ENCODE measurements at regions of chr19 and their contacts with region 1.

Region 1: DNA sequence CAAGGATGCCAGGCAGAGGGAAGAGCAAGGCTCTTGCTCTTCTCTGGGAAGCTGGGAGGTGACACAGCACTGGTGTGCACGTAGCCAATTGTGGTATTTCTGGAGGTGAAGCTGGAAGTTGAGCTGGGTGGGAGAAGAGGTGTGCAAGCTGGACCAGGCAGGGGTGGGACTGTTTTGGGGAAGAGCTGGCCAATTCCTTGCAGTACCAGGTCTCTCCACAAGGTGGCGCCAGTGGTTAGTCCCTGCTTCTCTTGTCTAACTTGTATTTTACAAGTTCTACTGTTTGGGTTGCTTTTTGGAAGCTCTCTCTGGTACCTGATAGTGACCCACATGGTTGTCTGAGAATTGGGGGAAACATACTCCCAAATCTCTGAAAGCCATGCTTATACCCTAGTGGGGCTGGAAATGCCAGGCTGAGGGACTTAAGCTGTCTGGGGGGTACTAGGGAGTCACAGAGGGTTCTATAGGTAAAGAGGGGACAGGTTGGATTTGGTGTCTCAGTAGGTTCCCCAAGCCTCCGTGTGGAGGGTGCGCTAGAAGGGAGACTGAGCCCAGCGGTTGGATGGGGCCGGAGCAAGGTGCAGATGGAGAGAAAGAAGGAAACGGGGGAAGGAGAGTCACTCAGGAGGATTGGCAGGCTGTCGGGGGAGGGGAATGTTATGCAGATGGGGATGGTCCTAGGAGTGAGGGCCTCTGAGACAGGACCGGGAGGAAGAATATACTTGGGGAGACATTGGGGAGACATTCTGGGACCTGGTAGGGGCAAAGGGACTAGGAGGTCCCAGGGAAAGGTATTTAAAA is 3.0 kb downstream of the HPN start:
- DNase-seq: peak; percentile 79
- ATAC-seq: no peak
- H3K4me3 Mint-ChIP-seq: no peak overlapping the region
- H3K27ac Mint-ChIP-seq: no peak overlapping the region
- H3K4me1 Mint-ChIP-seq: peaks cover 25% of the 10 kb centered on the region
- H3K27me3 Mint-ChIP-seq: peaks cover 4% of the 10 kb centered on the region

Region 2: GRCh38 chr19:35055715-35056179 is 11.2 kb after region 1 on chr19:
- CTCF ChIA-PET with region 1: interaction called, 17 read pairs
- POLR2A ChIA-PET with region 1: no interaction called
- intact Hi-C with region 1: no loop called
- DNase-seq: peak; percentile 41
- ATAC-seq: peak; percentile 47
- H3K4me3 Mint-ChIP-seq: no peak overlapping the region
- H3K27ac Mint-ChIP-seq: no peak overlapping the region
- H3K4me1 Mint-ChIP-seq: no peaks in the 10 kb centered on the region
- H3K27me3 Mint-ChIP-seq: peaks cover 2% of the 10 kb centered on the region

Region 3: GRCh38 chr19:35066691-35067563 is 22.4 kb after region 1 on chr19:
- CTCF ChIA-PET with region 1: interaction called, 17 read pairs
- POLR2A ChIA-PET with region 1: no interaction called
- intact Hi-C with region 1: no loop called
- DNase-seq: peak; percentile 96
- ATAC-seq: peak; percentile 89
- H3K4me3 Mint-ChIP-seq: peak overlapping the region; percentile 39
- H3K27ac Mint-ChIP-seq: peak overlapping the region; percentile 62
- H3K4me1 Mint-ChIP-seq: peaks cover 17% of the 10 kb centered on the region
- H3K27me3 Mint-ChIP-seq: no peaks in the 10 kb centered on the region

Region 4: GRCh38 chr19:35090506-35091237 is 46.2 kb after region 1 on chr19:
- CTCF ChIA-PET with region 1: interaction called, 6 read pairs
- POLR2A ChIA-PET with region 1: no interaction called
- intact Hi-C with region 1: loop called in 1 of 2 experiments (anchors 1 kb)
- DNase-seq: peak; percentile 65
- ATAC-seq: peak; percentile 88
- H3K4me3 Mint-ChIP-seq: no peak overlapping the region
- H3K27ac Mint-ChIP-seq: no peak overlapping the region
- H3K4me1 Mint-ChIP-seq: peaks cover 4% of the 10 kb centered on the region
- H3K27me3 Mint-ChIP-seq: peaks cover 6% of the 10 kb centered on the region

Region 5: GRCh38 chr19:35135389-35135909 is 90.9 kb after region 1 on chr19:
- CTCF ChIA-PET with region 1: interaction called, 9 read pairs
- POLR2A ChIA-PET with region 1: no interaction called
- intact Hi-C with region 1: loop called in 1 of 2 experiments (anchors 5 kb)
- DNase-seq: peak; percentile 83
- ATAC-seq: peak; percentile 95
- H3K4me3 Mint-ChIP-seq: no peak overlapping the region
- H3K27ac Mint-ChIP-seq: no peak overlapping the region
- H3K4me1 Mint-ChIP-seq: peaks cover 4% of the 10 kb centered on the region
- H3K27me3 Mint-ChIP-seq: no peaks in the 10 kb centered on the region

Region 6: DNA sequence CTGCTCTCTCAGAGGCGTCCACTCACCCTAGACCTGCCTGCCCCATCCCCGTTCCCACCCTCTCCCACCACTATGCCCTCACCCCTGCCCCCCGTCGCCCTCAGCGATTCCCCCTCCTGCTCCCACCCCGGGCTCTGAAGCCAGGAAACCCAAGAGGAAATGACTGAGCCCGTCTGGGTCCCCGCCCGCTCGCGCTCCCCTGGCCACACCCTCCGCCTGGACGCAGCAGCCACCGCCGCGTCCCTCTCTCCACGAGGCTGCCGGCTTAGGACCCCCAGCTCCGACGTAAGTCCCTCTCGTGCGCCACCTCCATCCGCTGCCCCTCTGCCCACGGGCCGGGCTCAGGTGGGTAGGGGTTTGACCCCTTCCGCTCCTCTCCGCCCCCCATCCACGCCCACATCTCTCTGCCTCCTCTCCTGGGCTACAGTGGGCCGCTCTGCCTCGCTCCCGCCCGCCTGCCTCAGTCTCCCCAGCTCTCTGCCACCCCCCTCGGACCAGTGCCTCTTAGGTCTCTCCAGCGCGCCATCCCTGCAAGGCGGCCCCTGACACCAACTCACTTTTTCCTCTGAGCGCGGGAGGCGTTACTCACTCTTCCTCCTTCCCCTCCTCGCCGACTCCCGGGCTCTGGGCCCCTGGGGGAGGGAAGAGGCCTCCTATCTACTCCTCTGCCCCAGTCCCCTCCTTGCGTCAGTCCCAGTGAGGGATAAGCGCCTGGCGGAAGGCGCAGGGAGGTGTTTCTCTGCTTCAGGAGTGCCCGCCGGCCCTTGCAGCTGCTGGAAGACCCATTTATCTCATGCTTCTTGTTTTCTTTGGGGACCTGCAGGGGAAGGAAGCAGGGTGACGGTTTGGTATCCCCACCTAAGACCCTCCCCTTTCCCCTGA is 110.2 kb after region 1 on chr19 and contains the start of gene FXYD5:
- CTCF ChIA-PET with region 1: no interaction called
- POLR2A ChIA-PET with region 1: no interaction called
- intact Hi-C with region 1: no loop called
- DNase-seq: peak; percentile 93
- ATAC-seq: peak; percentile 81
- H3K4me3 Mint-ChIP-seq: peak within 1 kb of the TSS; percentile 96
- H3K27ac Mint-ChIP-seq: peak within 1 kb of the TSS; percentile 99
- H3K4me1 Mint-ChIP-seq: peaks cover 52% of the 10 kb centered on the region
- H3K27me3 Mint-ChIP-seq: no peaks in the 10 kb centered on the region
- total RNA-seq, gene FXYD5: 261 to 358 TPM

Measured in activated CD4-positive, alpha-beta T cell treated with anti-CD3 and anti-CD28 coated beads for 36 hours (primary cell).